Heart right ventricle (tissue), 16 donors: ENCODE measurements at regions of chr9 and their contacts with region 1.

Region 1: DNA sequence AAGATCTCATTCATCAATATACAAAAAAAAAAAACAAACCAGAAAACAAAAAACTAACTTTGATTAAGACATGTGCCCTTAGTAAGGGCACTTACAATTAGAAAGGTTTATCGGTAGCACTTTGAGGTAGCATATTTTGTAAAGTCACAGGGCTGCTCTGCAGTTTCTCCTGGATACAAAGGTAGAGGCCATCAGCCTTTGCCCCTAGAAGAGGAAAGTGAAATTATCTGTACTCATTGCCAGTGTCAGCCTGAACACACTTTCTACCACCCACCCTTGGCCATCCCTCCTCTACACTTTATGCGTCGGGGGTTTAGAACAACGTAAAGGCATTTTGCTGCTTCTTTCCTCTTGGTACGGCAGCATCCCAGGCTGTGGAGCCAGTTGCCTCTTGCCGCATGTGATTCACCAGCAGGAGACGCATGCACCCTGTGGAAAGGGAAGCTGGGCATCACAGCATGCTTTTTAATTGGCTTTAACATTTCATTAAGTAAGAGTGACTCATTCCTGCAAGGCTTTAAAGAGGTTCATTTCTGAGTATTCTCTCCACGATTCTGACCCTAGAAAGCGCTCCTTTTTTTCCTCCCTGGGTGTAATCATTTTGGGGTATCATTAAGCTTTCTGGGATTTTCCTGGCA is 84.6 kb downstream of the CEMIP2 start:
- DNase-seq: no peak
- ATAC-seq: peak in 2 of 8 donors; percentile 22 to 61
- H3K4me3 ChIP-seq: no peak overlapping the region
- H3K27ac ChIP-seq: peak overlapping the region in 1 of 10 donors; percentile 61
- H3K4me1 ChIP-seq: peaks cover 0 to 75% (median 30%) of the 10 kb centered on the region in 9 donors
- H3K27me3 ChIP-seq: no peaks in the 10 kb centered on the region
- CTCF ChIP-seq: peak in 3 of 9 donors; percentile 33 to 40 (median 39)

Region 2: GRCh38 chr9:71638627-71639026 is 45.1 kb before region 1 on chr9:
- intact Hi-C with region 1: loop called in 1 of 10 experiments (anchors 10 kb)
- DNase-seq: peak in 1 of 2 donors; percentile 55
- ATAC-seq: peak; percentile 80 to 96 (median 90)
- H3K4me3 ChIP-seq: peak overlapping the region in 1 of 10 donors; percentile 15
- H3K27ac ChIP-seq: peak overlapping the region in 9 of 10 donors; percentile 31 to 82 (median 68)
- H3K4me1 ChIP-seq: peaks cover 0 to 54% (median 17%) of the 10 kb centered on the region in 9 donors
- H3K27me3 ChIP-seq: no peaks in the 10 kb centered on the region
- CTCF ChIP-seq: no peak

Region 3: GRCh38 chr9:71663931-71664459 is 19.7 kb before region 1 on chr9:
- intact Hi-C with region 1: loop called in 1 of 10 experiments (anchors 1 kb)
- DNase-seq: no peak
- ATAC-seq: peak in 1 of 8 donors; percentile 14
- H3K4me3 ChIP-seq: no peak overlapping the region
- H3K27ac ChIP-seq: peak overlapping the region in 5 of 10 donors; percentile 5 to 70 (median 61)
- H3K4me1 ChIP-seq: peaks cover 0 to 32% (median 16%) of the 10 kb centered on the region in 9 donors
- H3K27me3 ChIP-seq: peaks cover 0 to 5% (median 0%) of the 10 kb centered on the region in 7 donors
- CTCF ChIP-seq: no peak